ENCODE measurements at regions of chr10 and their contacts with region 1.

Region 1: GRCh38 chr10:62851442-62851841 is 35.3 kb upstream of the EGR2 start:
- DNase-seq: no peak
- ATAC-seq: no peak
- H3K4me3 ChIP-seq: no peak overlapping the region
- H3K4me3 Mint-ChIP-seq: no peak overlapping the region
- H3K27ac ChIP-seq: no peak overlapping the region
- H3K27ac Mint-ChIP-seq: no peak overlapping the region
- H3K4me1 ChIP-seq: peaks cover 0 to 39% of the 10 kb centered on the region in 2 donors
- H3K4me1 Mint-ChIP-seq: peaks cover 10 to 54% (median 14%) of the 10 kb centered on the region in 7 donors
- H3K27me3 ChIP-seq: no peaks in the 10 kb centered on the region
- H3K27me3 Mint-ChIP-seq: peaks cover 0 to 18% (median 13%) of the 10 kb centered on the region in 5 donors

Region 2: GRCh38 chr10:62437696-62438095 is 413.7 kb before region 1 on chr10:
- CTCF ChIA-PET with region 1: no interaction called
- POLR2A ChIA-PET with region 1: no interaction called
- intact Hi-C with region 1: no loop called
- DNase-seq: peak in 7 of 9 donors; percentile 42 to 71 (median 65)
- ATAC-seq: peak; percentile 79
- H3K4me3 ChIP-seq: no peak overlapping the region
- H3K4me3 Mint-ChIP-seq: no peak overlapping the region
- H3K27ac ChIP-seq: no peak overlapping the region
- H3K27ac Mint-ChIP-seq: no peak overlapping the region
- H3K4me1 ChIP-seq: no peaks in the 10 kb centered on the region
- H3K4me1 Mint-ChIP-seq: peaks cover 0 to 12% (median 3%) of the 10 kb centered on the region in 7 donors
- H3K27me3 ChIP-seq: no peaks in the 10 kb centered on the region
- H3K27me3 Mint-ChIP-seq: peaks cover 0 to 24% (median 4%) of the 10 kb centered on the region in 5 donors

Region 3: DNA sequence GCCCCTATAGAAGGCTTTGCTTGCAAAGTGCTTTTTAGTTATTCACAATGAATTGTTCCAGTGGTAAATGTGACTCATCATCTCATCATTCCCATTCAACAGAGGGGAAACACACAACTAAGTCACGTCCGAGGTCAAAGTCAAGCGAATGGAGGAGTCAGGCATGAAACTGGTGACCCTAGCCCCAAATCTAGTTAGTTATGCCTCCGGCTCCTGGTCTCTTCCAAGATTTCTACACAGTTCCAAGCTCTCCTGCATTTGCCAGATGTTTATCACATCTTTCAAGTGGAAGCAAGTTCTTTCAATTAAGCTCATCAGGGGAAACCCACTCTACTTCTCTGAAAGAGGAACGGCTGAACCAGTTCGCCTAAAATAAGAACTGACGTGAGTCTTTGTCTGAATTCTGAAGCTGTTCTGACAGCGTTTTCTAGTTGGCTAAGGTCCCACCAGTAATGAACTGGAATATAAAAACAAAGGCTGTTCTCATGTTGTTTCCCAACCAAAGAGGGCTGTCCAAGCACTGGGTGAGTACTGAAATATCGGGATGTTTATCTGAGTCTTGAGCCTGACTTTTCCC is 140.8 kb after region 1 on chr10:
- CTCF ChIA-PET with region 1: no interaction called
- POLR2A ChIA-PET with region 1: no interaction called
- intact Hi-C with region 1: loop called in 1 of 2 experiments (anchors 1 kb)
- DNase-seq: peak in 1 of 9 donors; percentile 32
- ATAC-seq: no peak
- H3K4me3 ChIP-seq: no peak overlapping the region
- H3K4me3 Mint-ChIP-seq: peak overlapping the region in 1 of 10 donors; percentile 29
- H3K27ac ChIP-seq: no peak overlapping the region
- H3K27ac Mint-ChIP-seq: no peak overlapping the region
- H3K4me1 ChIP-seq: no peaks in the 10 kb centered on the region
- H3K4me1 Mint-ChIP-seq: peaks cover 0 to 32% (median 6%) of the 10 kb centered on the region in 7 donors
- H3K27me3 ChIP-seq: no peaks in the 10 kb centered on the region
- H3K27me3 Mint-ChIP-seq: peaks cover 0 to 26% (median 6%) of the 10 kb centered on the region in 5 donors

Region 4: GRCh38 chr10:63068246-63068645 is 216.8 kb after region 1 on chr10:
- CTCF ChIA-PET with region 1: interaction called, 5 read pairs
- POLR2A ChIA-PET with region 1: no interaction called
- intact Hi-C with region 1: loop called in 1 of 2 experiments (anchors 5 kb)
- DNase-seq: peak in 1 of 9 donors; percentile 35
- ATAC-seq: no peak
- H3K4me3 ChIP-seq: no peak overlapping the region
- H3K4me3 Mint-ChIP-seq: peak overlapping the region in 1 of 10 donors; percentile 7
- H3K27ac ChIP-seq: no peak overlapping the region
- H3K27ac Mint-ChIP-seq: peak overlapping the region in 1 of 9 donors; percentile 3
- H3K4me1 ChIP-seq: no peaks in the 10 kb centered on the region
- H3K4me1 Mint-ChIP-seq: peaks cover 0 to 19% (median 4%) of the 10 kb centered on the region in 7 donors
- H3K27me3 ChIP-seq: no peaks in the 10 kb centered on the region
- H3K27me3 Mint-ChIP-seq: peaks cover 30 to 57% (median 49%) of the 10 kb centered on the region in 5 donors